ENCODE measurements at regions of chr4 and their contacts with region 1.

Region 1: GRCh38 chr4:1459722-1460511 is 53.7 kb upstream of the NKX1-1 start:
- DNase-seq: peak in 1 of 2 donors; percentile 46
- H3K4me3 ChIP-seq: no peak overlapping the region
- H3K27ac ChIP-seq: no peak overlapping the region
- H3K4me1 ChIP-seq: no peaks in the 10 kb centered on the region
- H3K27me3 ChIP-seq: peaks cover 0 to 60% of the 10 kb centered on the region in 2 donors
- CTCF ChIP-seq: no peak
- POLR2A ChIP-seq: no peak

Region 2: DNA sequence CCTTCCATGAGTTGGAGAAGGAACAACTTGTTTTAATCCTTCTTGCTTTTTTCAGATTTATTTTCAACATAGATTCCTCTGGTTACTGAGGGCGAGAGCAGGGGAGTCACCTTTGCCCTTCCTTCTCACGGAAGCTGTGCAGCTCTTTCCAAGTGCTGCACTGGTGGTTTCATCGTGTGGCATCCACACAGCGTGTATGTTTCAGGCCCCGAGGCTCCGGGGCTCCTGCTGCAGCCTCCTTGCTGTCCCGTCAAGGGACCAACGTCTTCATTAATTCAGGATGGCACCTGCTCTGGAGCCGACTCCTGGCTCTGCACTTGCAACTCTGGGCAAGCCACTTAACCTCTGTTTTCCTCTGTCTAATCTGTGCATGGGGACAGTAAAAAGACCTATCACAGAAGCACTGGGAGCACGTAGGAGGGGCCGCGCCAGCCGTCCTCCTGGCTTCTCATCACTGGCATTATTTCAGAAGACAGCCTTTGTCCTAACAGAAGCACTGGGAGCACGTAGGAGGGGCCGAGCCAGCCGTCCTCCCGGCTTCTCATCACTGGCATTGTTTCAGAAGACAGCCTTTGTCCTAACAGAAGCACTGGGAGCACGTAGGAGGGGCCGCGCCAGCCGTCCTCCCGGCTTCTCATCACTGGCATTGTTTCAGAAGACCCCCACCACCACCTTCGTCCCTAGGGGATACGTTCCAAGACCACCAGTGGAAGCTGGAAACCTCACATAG is 64.2 kb after region 1 on chr4:
- intact Hi-C with region 1: loop called (anchors 2 kb)
- DNase-seq: no peak
- H3K4me3 ChIP-seq: no peak overlapping the region
- H3K27ac ChIP-seq: no peak overlapping the region
- H3K4me1 ChIP-seq: no peaks in the 10 kb centered on the region
- H3K27me3 ChIP-seq: peaks cover 0 to 17% of the 10 kb centered on the region in 2 donors
- CTCF ChIP-seq: no peak
- POLR2A ChIP-seq: no peak

Measured in breast epithelium (tissue), 4 donors.